Activated T-helper 1 cell treated with anti-CD3 and anti-CD28 coated beads, Interleukin-12 subunit alpha, Interleukin-12 subunit beta, Interleukin-2, Interleukin-4 antibody, amounts not matched to agents 30 ng/mL and 10 ng/mL and 1 ng/mL, durations not matched to agents 14 hours and 24 hours and 36 hours (primary cell): ENCODE measurements at regions of chr4 and their contacts with region 1.

Region 1: DNA sequence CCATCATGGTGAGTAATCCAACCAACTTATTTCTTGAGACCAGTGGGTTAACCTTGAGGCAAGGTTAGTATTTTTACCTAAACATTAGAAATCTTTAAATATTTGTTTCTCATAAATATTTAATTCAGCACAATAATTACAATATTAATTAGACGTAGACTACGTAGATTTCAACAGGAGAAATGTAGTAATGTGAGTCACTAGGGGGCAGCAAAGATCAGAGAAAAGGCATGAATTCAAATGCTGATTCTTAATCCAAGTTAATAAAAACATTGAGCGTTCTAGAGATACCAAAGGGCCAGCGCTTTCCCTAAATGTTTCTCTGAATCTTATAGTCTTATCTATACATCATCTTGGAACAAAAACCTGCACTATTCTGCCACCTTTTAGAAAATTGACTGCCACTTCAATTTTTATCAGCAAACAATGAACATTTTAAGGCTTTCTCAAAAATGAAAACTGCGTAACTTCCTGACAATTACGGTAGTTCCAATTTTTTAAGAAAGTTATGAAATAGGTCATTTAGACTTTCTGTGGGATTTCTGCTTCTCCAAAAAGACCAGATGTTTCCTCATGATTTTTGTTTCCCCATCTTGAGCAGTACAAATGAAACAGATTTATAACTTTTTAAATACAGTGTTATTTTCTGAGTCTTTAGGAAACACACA is 180.7 kb downstream of the GASK1B start:
- DNase-seq: no peak
- H3K4me3 Mint-ChIP-seq: no peak overlapping the region
- H3K27ac Mint-ChIP-seq: no peak overlapping the region
- H3K4me1 Mint-ChIP-seq: no peaks in the 10 kb centered on the region
- H3K27me3 Mint-ChIP-seq: no peaks in the 10 kb centered on the region

Region 2: DNA sequence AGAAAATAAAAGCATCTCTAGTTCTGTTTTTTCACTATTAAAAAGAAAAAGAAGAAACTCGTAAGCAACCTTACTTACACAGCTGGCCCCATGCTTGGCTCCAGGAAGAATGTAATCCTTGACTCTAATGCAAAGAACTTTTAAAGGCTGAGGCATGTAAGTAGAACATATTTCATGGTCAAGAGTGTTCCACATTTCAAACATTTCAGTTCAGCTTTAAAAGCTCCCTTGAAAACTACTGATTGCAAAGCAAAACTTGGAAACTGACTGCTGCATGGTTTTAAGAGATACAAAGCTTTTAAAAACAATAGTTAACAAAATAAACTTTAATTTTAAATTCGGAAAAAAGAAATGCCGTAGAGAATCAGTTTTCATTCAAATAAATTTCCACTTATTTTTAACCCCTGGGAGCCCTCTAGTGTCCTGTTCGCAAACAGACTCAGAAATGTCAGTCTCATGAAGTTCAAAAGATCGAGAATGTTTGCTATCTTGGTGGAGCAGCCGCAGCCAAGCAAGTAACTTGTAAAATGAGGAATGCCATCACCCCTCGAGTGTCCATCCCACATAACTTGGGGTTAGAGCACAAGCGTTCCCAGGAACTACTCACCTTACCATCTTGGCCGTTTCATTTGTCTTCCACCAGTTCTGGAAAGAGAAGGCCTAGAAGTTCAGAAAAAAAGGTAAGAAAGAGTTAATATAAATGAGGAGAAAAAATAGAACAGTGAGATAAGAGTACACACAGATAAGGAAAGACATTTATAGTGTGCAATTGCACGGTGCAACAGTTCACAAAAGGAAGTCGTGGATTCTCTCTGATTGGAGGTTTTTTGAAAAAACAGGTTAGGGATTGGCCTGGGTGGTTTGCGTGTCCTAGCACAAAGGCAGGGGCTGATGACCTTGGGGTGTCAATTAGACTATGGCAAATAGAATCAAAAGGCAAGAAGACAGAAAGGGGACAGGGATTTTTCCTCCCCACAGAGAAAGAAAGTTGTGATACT is 180.4 kb after region 1 on chr4 and contains the start of gene GASK1B:
- intact Hi-C with region 1: loop called (anchors 1 kb)
- DNase-seq: no peak
- H3K4me3 Mint-ChIP-seq: no peak within 1 kb of the TSS
- H3K27ac Mint-ChIP-seq: no peak within 1 kb of the TSS
- H3K4me1 Mint-ChIP-seq: no peaks in the 10 kb centered on the region
- H3K27me3 Mint-ChIP-seq: peaks cover 39% of the 10 kb centered on the region
- total RNA-seq, gene GASK1B: not detected in 2 replicates

Region 3: DNA sequence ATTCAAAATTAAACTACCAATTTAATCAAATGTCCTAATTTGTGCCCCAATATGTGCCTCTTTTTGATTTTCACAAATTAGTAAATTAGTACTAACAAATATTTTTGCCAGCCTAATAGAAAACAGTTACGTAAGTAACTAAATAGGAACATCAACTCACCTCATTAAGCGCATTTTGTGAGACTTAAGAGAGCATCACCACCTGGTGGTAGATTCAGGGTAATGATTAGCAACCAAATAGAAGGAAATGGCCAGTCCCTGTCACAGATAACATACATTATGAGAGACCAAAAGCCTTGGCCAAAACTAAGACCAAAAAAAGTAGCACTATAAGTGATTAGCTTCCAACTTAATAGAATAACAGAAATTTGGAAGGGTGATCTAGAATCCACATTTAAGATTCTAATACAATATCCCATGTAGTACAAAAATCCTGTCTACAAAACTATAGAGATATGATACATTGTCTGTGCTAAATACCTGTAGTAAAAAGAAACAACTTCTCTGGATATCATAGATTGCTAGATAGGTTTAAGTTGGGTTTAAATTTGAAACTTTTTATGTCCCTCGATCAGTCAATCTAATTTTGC is 632.8 kb after region 1 on chr4:
- intact Hi-C with region 1: loop called (anchors 10 kb)
- DNase-seq: no peak
- H3K4me3 Mint-ChIP-seq: no peak overlapping the region
- H3K27ac Mint-ChIP-seq: no peak overlapping the region
- H3K4me1 Mint-ChIP-seq: no peaks in the 10 kb centered on the region
- H3K27me3 Mint-ChIP-seq: peaks cover 10% of the 10 kb centered on the region